Activated CD8-positive, alpha-beta memory T cell treated with anti-CD3 and anti-CD28 coated beads, Interleukin-2, amount 10 ng/mL, durations not matched to agents 7 days and 5 days (primary cell): ENCODE measurements at regions of chr22 and their contacts with region 1.

Region 1: GRCh38 chr22:50525390-50526068 is at the start of gene SCO2:
- DNase-seq: peak; percentile 97
- ATAC-seq: peak; percentile 59
- H3K4me3 Mint-ChIP-seq: peak within 1 kb of the TSS; percentile 80
- H3K27ac Mint-ChIP-seq: peak within 1 kb of the TSS; percentile 94
- H3K4me1 Mint-ChIP-seq: peaks cover 44% of the 10 kb centered on the region
- H3K27me3 Mint-ChIP-seq: no peaks in the 10 kb centered on the region
- total RNA-seq, gene SCO2: 9.1 to 11.6 TPM

Region 2: DNA sequence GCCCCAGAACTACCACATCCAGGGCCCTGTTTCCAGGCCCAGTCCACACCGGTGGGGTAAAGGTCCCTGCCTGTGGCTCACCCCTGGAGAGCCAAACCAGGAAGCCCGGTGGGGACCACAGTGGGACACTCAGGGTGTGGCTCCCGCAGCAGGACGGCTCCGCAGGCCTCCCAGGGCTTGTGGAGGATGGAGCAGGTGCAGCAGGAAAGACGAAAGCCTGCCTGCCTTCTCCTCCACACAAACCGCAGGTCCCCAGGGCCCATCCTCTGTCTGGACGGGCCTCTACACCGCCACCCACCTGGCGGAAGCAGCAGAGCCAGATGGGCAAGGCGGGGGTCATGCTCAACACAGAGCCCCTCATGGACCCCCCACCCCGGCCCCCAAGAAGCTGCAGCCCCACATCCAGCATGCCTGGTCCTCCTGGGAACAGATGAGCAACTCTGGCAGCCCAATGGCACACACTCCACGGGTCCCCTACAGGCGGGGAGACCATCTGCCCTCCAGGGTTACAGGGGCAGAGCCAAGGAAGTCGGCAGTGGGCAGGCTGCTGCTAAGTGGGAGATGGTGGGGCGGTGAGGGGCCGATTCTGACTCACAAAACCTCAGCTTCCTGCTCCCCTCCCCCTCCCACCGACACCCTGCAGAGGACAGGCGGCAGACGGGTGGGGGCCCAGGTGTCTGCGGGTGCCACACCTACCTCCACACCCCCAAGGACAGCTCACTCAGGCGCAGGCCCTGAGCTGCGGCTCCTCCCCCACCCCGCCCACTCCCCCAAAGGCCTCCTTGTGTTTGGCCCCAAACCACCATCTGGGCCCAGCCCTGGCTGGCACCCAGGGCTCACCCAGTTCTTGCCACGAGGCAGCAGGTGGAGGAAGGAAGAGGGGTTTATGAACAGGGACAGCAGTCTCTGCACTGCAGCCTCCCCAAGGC is 55.9 kb before region 1 on chr22:
- CTCF ChIA-PET with region 1: interaction called, 20 read pairs
- DNase-seq: peak; percentile 99
- ATAC-seq: peak; percentile 77
- H3K4me3 Mint-ChIP-seq: peak overlapping the region; percentile 69
- H3K27ac Mint-ChIP-seq: peak overlapping the region; percentile 88
- H3K4me1 Mint-ChIP-seq: peaks cover 69% of the 10 kb centered on the region
- H3K27me3 Mint-ChIP-seq: no peaks in the 10 kb centered on the region

Region 3: DNA sequence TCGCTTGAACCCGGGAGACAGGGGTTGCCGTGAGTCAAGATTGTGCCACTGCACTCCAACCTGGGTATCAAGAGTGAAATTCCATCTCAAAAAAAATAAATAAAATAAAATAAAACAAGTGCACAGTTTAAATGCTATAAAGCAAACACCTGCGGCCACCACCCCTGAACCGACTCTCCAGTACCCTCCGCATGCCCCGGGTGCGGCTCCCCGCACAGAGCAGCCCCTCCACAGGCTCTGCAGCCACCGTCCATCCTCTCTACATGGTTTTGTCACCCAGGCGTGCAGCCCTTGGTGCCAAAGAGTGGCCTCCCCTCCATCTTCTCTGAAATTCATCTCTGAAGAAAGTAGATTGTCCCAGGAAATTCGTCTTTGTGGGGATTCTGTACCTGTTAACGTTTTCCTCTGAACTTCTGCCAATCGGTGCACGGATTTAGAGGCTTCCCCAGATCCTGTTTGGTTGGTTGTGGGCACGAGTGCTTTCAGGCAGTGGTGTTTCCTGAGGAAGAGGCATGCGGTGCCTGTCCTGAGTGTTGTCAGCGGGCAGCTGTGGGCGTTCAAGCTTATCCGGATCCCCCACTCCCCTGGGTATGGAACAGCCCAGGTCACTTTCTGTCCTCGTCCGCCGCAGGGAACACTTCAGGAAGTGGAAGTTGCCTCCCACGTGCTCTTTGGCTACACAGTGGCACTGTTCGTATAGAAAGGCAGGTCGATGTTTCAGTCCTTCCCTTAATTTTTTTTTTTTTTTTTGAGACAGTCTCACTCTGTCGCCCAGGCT is 34.8 kb before region 1 on chr22:
- CTCF ChIA-PET with region 1: no interaction called
- DNase-seq: no peak
- ATAC-seq: peak; percentile 32
- H3K4me3 Mint-ChIP-seq: no peak overlapping the region
- H3K27ac Mint-ChIP-seq: no peak overlapping the region
- H3K4me1 Mint-ChIP-seq: peaks cover 8% of the 10 kb centered on the region
- H3K27me3 Mint-ChIP-seq: peaks cover 5% of the 10 kb centered on the region

Region 4: DNA sequence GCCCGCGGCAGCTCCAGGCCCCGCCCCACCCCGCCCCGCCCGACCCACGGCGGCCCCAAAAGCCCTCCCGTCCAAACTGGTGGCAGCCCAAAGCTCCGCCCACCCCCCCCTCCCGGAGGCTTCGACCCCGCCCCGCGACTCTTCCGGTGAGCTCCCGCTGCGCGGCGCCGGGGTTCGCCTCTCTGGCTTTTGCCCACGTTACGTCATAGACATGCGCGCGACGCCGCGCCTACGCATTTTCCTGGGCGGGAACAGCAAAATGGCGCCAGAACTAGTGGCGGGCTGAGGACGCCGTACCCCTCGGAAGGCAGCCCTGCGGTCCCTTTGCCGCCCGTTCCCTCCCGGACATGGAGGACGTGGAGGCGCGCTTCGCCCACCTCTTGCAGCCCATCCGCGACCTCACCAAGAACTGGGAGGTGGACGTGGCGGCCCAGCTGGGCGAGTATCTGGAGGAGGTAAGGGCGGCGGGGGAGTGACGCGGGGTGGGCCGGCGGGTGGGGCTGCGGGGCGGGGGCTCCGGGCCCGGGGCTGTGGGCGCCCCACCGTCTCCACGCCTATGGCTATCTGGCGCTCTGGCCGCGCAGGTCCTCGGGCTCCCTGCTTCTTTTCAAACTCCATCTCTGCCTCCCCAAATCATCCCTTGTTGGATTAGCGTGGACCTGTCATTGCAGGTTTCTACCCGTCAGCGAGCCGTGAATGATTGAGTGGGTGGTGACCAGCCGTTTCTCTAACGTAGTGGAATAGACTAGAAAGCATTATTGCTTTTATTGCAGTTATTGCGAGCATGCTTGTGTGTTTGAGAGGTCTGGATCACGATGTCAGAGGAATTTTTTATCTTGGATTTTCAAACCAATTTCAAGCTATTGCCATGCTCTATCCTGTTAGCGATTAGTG is 17.3 kb before region 1 on chr22 and contains the start of gene NCAPH2:
- CTCF ChIA-PET with region 1: interaction called, 79 read pairs
- DNase-seq: peak; percentile 98
- ATAC-seq: peak; percentile 74
- H3K4me3 Mint-ChIP-seq: peak within 1 kb of the TSS; percentile 98
- H3K27ac Mint-ChIP-seq: peak within 1 kb of the TSS; percentile 93
- H3K4me1 Mint-ChIP-seq: peaks cover 37% of the 10 kb centered on the region
- H3K27me3 Mint-ChIP-seq: no peaks in the 10 kb centered on the region
- total RNA-seq, gene NCAPH2: 136 to 181 TPM

Region 5: GRCh38 chr22:50562523-50563412 is 37.2 kb after region 1 on chr22 and contains the start of gene SYCE3:
- CTCF ChIA-PET with region 1: interaction called, 69 read pairs
- DNase-seq: peak; percentile 97
- ATAC-seq: peak; percentile 98
- H3K4me3 Mint-ChIP-seq: peak within 1 kb of the TSS; percentile 84
- H3K27ac Mint-ChIP-seq: peak within 1 kb of the TSS; percentile 79
- H3K4me1 Mint-ChIP-seq: peaks cover 20% of the 10 kb centered on the region
- H3K27me3 Mint-ChIP-seq: peaks cover 10% of the 10 kb centered on the region
- total RNA-seq, gene SYCE3: 0.76 to 0.96 TPM

Region 6: DNA sequence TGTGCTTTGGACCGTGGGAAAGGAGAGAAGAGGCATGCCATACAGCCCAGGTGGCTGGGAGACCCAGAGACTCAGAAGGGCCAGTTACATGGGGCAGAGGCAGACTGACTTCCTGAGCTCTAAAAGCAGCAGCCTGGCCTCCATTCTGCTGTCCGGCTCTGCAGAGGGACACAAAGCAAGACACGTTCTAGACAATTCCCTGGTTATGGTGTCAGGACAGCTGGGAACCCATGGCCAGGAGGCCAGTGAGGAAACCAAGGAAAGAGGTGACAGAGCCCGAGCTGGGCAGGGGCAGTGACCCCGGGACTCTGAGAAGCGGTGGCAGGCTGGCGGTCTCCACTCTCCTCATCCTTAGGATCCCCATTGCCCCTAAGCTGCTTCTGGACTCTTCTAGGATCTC is 50.0 kb after region 1 on chr22:
- CTCF ChIA-PET with region 1: no interaction called
- DNase-seq: no peak
- ATAC-seq: no peak
- H3K4me3 Mint-ChIP-seq: no peak overlapping the region
- H3K27ac Mint-ChIP-seq: peak overlapping the region; percentile 20
- H3K4me1 Mint-ChIP-seq: peaks cover 10% of the 10 kb centered on the region
- H3K27me3 Mint-ChIP-seq: no peaks in the 10 kb centered on the region